Endothelial cell of umbilical vein (primary cell): ENCODE measurements at regions of chr4 and their contacts with region 1.

Region 1: DNA sequence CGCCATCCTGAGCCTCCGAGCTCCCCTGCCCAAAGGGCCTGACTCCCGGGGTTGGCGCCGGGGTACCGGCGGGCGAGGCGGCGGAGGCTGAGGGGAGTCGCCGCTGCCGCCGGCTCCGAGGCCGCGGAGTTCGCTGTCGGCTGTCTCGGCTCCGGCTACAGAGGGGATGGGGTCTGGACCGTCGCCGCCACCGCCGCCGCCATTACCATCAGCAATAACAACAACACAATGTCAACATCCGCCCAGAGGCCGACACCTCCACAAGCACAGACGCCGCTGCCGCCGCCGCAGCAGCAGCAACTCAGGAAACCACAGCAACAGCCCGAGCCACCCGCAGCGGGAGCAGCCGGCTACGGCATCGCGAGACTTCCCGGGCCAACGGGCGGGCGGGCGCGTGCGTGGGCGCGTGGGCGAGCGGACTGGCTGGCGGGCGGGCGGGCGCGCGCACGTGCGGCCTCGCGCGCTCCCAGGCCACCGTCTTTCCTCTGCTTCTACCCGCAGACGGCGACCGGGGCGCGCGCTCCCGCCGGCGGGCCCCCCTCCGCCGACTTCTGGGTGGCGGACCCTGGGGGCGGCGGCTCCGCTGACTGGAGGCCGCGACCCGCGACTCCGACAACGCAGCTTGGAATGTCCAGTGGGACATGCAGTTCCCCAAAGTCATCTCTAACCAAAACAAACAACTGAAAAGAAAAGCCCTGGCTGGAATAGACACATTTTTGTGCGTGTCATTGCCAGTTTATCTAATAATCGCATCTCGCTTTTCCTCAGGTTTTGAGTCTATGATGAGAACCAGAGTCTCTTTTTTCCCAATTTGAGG is at the start of gene CHIC2:
- DNase-seq: peak; percentile 94
- H3K4me3 ChIP-seq: peak within 1 kb of the TSS; percentile 55 to 98 (median 96)
- H3K27ac ChIP-seq: peak within 1 kb of the TSS; percentile 96
- H3K4me1 ChIP-seq: peaks cover 66% of the 10 kb centered on the region
- H3K27me3 ChIP-seq: no peaks in the 10 kb centered on the region
- CTCF ChIP-seq: no peak
- POLR2A ChIP-seq: peak; percentile 88
- total RNA-seq, gene CHIC2: 43.3 and 43.8 TPM in 2 replicates

Region 2: DNA sequence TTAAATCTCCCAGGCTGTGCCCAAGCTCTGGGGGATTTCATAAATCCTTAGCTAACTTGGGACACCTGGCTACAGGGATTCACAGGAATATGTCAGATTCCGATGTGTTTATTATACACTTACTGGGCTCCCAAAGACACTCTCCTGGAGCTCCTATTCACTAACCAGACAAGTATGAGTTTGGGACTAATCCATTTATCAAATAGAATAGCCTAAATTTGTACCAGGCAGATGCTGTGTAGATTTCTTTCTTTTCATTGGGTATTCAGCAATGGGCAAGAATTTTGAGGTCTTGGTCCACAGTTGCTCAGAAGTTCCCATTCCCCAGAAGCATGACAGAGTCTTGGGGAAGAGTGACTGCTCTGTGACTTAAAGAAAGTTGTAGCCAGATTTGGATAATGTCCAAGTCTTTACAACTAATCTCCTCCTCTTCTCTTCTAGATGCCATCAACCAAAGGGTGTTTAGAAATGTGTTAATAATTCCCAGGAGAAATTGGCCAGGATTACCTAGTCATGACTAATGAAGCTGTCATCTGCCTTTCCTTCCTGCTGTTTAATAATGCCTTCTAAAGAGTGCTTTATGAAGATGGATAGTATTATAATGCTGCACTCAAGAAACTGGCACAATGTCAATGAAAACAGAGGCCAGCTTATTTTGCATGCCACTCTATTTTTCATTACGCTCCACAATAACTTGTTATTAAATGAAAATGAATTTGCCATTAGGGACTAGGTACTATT is 121.0 kb before region 1 on chr4:
- CTCF ChIA-PET with region 1: interaction called, 3 read pairs
- POLR2A ChIA-PET with region 1: interaction called, 3 read pairs
- dilution Hi-C with region 1: no loop called
- intact Hi-C with region 1: loop called (anchors 1 kb)
- DNase-seq: peak; percentile 98
- H3K4me3 ChIP-seq: no peak overlapping the region
- H3K27ac ChIP-seq: peak overlapping the region; percentile 52
- H3K4me1 ChIP-seq: peaks cover 17% of the 10 kb centered on the region
- H3K27me3 ChIP-seq: no peaks in the 10 kb centered on the region
- CTCF ChIP-seq: no peak
- POLR2A ChIP-seq: no peak

Region 3: GRCh38 chr4:54041100-54041499 is 23.4 kb before region 1 on chr4:
- CTCF ChIA-PET with region 1: no interaction called
- POLR2A ChIA-PET with region 1: interaction called, 11 read pairs
- dilution Hi-C with region 1: no loop called
- intact Hi-C with region 1: no loop called
- DNase-seq: no peak
- H3K4me3 ChIP-seq: no peak overlapping the region
- H3K27ac ChIP-seq: no peak overlapping the region
- H3K4me1 ChIP-seq: peaks cover 5% of the 10 kb centered on the region
- H3K27me3 ChIP-seq: no peaks in the 10 kb centered on the region
- CTCF ChIP-seq: no peak
- POLR2A ChIP-seq: no peak

Region 4: DNA sequence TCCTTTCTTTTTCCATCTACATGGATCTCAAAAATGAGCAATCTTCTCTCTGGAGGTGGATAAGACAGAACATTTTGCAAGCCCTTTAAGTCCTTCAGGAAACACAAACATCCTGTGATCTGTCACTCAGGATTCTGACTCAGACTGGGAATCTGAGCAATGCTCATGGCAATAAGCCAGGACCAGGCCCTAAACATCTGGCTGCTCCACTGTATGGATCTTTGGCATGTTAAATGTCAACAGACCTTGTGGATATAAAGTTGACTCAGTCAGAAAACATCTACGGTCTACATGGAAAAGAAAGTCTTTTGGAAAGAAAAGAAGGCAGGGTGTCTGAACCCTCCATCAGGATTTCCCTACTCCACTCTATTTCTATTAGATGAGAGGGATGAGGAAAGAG is 17.7 kb after region 1 on chr4:
- CTCF ChIA-PET with region 1: interaction called, 5 read pairs
- POLR2A ChIA-PET with region 1: interaction called, 4 read pairs
- dilution Hi-C with region 1: no loop called
- intact Hi-C with region 1: loop called (anchors 1 kb)
- DNase-seq: peak; percentile 96
- H3K4me3 ChIP-seq: peak overlapping the region in 1 of 3 experiments; percentile 20
- H3K27ac ChIP-seq: peak overlapping the region; percentile 77
- H3K4me1 ChIP-seq: peaks cover 39% of the 10 kb centered on the region
- H3K27me3 ChIP-seq: no peaks in the 10 kb centered on the region
- CTCF ChIP-seq: no peak
- POLR2A ChIP-seq: peak; percentile 67

Region 5: DNA sequence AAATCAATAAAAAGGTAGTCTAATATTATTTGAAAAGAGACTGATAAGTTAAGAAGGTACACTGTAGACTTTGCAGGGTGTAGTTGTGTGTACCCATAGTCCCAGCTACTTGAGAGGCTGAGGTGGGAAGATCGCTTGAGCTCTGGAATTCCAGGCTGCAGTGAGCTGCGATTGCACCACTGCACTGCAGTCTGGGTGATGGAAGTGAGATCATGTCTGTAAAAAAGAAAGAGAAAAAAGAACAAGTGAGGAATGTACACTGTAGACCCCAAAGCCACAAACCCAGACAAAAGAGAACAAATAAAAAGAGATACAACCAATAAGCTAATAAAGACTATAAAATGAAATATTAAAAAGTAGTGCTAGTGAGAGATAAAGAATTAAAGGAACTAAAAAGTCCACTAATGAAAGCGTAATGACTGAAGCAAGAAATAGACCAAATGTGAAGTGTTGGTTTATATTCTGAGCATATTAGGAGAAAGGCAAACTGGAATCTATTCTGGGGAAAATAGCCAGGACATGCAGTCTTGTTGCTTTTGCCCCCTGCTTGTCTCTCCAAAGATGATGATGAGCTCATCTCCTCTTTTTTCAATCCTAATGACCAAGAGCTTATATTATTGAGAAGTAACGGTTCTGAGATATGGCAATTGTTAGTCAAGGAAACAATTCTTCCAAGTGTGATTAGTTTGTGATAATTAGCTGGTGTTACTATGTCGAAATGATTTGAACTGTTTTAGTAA is 54.5 kb after region 1 on chr4:
- CTCF ChIA-PET with region 1: no interaction called
- POLR2A ChIA-PET with region 1: no interaction called
- dilution Hi-C with region 1: no loop called
- intact Hi-C with region 1: no loop called
- DNase-seq: no peak
- H3K4me3 ChIP-seq: no peak overlapping the region
- H3K27ac ChIP-seq: no peak overlapping the region
- H3K4me1 ChIP-seq: no peaks in the 10 kb centered on the region
- H3K27me3 ChIP-seq: no peaks in the 10 kb centered on the region
- CTCF ChIP-seq: no peak
- POLR2A ChIP-seq: no peak

Region 6: DNA sequence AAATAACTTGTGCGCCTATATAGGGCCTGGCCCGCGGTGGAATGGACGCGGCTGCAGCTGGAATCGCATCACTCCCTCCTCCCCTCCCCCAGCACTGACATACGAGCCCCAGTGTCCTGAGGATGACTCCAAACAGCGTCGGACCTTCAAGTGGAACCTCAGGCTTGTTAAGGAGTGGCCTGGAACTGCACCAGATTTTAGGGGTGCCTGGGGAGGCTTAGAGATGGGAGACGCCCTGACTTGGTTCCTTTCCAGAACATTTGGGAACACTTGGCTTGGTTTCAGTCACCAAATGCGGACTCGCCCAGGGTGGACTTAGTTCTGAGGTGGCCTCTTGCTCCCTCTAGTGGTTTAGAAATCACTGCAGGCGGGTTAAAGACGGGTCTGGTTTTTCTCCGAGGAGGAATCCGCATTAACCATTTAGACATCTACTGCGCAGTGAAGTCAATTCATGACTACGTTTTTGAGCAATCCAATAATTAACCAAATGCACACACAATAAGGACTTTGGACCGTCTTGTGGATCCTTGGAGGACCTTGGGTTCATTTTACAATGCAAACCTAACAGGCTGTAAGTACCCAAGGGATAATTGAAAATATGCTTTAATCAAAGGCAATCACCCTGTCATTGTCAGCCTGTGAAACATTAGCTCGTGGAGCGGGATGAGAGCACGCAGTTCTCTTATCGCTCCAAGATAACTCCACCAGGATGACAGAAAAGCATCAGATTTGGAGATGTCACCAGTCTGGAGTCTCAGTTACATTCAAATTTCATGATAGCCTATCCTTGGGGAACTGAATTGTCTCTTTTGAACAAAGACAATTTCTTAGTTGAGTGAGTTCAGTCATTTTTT is 153.4 kb after region 1 on chr4:
- CTCF ChIA-PET with region 1: interaction called, 8 read pairs
- POLR2A ChIA-PET with region 1: no interaction called
- dilution Hi-C with region 1: no loop called
- intact Hi-C with region 1: loop called (anchors 2 kb)
- DNase-seq: peak; percentile 84
- H3K4me3 ChIP-seq: peak overlapping the region; percentile 34 to 78 (median 58)
- H3K27ac ChIP-seq: peak overlapping the region; percentile 30
- H3K4me1 ChIP-seq: peaks cover 2% of the 10 kb centered on the region
- H3K27me3 ChIP-seq: peaks cover 2 to 7% of the 10 kb centered on the region in 2 experiments
- CTCF ChIP-seq: peak; percentile 82 to 84
- POLR2A ChIP-seq: no peak